T-cell (primary cell): ENCODE measurements at regions of chr12 and their contacts with region 1.

Region 1: DNA sequence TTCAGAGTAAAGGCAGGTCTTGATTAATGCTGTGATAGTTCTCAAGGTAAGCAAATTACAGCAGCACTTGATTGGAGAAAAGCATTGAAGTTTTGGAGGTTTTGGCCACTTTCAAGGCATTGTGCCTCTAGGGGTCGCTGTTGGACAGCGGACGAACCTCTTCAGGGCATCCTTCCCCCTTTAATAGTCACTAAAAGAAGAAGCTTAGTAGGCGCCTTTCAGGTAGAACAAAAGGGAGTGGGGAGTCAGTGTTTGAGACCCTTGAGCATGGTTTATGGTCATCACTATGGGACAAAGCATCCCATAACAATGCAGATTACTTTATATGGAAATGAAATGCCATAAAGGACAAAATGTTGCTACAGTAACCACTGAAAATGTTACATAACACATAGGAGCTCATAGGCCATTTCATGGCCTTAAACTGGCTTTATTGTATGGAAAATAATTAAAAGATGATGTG is 199.5 kb upstream of the DCN start:
- DNase-seq: peak; percentile 61 to 92 (median 80)
- ATAC-seq: peak; percentile 84 to 89 (median 87)
- H3K4me3 ChIP-seq: peak overlapping the region in 1 of 2 donors; percentile 67
- H3K4me3 Mint-ChIP-seq: peak overlapping the region; percentile 62 to 76 (median 74)
- H3K27ac ChIP-seq: no peak overlapping the region
- H3K27ac Mint-ChIP-seq: peak overlapping the region; percentile 40 to 64
- H3K4me1 ChIP-seq: peaks cover 8% of the 10 kb centered on the region in 2 experiments
- H3K4me1 Mint-ChIP-seq: peaks cover 6 to 16% (median 7%) of the 10 kb centered on the region in 3 donors
- H3K27me3 ChIP-seq: peaks cover 0 to 4% of the 10 kb centered on the region in 2 experiments
- H3K27me3 Mint-ChIP-seq: peaks cover 7 to 9% of the 10 kb centered on the region in 2 donors

Region 2: GRCh38 chr12:91307957-91308670 is 74.0 kb before region 1 on chr12:
- CTCF ChIA-PET with region 1: no interaction called
- POLR2A ChIA-PET with region 1: no interaction called
- DNase-seq: no peak
- ATAC-seq: no peak
- H3K4me3 ChIP-seq: no peak overlapping the region
- H3K4me3 Mint-ChIP-seq: no peak overlapping the region
- H3K27ac ChIP-seq: no peak overlapping the region
- H3K27ac Mint-ChIP-seq: no peak overlapping the region
- H3K4me1 ChIP-seq: no peaks in the 10 kb centered on the region
- H3K4me1 Mint-ChIP-seq: no peaks in the 10 kb centered on the region
- H3K27me3 ChIP-seq: no peaks in the 10 kb centered on the region
- H3K27me3 Mint-ChIP-seq: peaks cover 5 to 6% of the 10 kb centered on the region in 2 donors

Region 3: DNA sequence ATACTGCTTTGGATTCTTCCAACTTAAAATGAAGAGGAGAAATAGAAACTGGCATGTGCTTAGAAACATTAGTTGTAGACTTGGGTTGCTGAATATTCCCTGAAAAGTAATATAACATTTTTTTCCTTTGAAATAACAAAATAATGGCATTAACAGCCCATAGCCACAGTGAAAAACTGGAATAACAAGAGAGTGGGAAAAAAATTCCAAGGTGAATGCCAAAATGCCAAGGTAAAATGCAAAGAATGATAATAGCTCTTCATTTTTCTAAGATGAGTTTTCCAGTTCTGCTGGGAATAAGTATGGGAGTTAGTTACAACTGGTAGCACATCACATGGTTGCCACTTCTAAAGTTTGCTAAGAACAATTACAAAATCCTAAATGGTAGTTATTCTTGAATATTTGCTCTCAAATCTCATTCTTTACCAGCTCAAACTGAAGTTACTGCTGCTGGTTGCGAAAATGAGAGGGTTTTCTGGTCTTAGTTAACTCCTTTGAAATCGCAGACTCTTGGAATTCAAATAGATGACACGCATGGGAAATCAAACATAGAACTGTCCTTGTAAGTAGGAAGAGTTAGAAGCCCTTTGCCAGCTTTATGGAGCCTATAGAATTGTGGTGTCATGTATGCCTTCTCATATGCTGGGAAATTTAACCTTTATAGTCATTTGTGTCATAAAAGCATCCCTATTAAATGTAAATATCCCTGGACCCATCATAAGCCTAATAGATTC is 34.5 kb before region 1 on chr12:
- CTCF ChIA-PET with region 1: no interaction called
- POLR2A ChIA-PET with region 1: no interaction called
- DNase-seq: no peak
- ATAC-seq: no peak
- H3K4me3 ChIP-seq: no peak overlapping the region
- H3K4me3 Mint-ChIP-seq: no peak overlapping the region
- H3K27ac ChIP-seq: no peak overlapping the region
- H3K27ac Mint-ChIP-seq: no peak overlapping the region
- H3K4me1 ChIP-seq: no peaks in the 10 kb centered on the region
- H3K4me1 Mint-ChIP-seq: no peaks in the 10 kb centered on the region
- H3K27me3 ChIP-seq: no peaks in the 10 kb centered on the region
- H3K27me3 Mint-ChIP-seq: peaks cover 3 to 16% of the 10 kb centered on the region in 2 donors

Region 4: GRCh38 chr12:91370086-91370868 is 11.8 kb before region 1 on chr12:
- CTCF ChIA-PET with region 1: interaction called, 8 to 12 read pairs
- POLR2A ChIA-PET with region 1: no interaction called
- DNase-seq: peak in 1 of 35 experiments; percentile 4
- ATAC-seq: no peak
- H3K4me3 ChIP-seq: no peak overlapping the region
- H3K4me3 Mint-ChIP-seq: no peak overlapping the region
- H3K27ac ChIP-seq: no peak overlapping the region
- H3K27ac Mint-ChIP-seq: no peak overlapping the region
- H3K4me1 ChIP-seq: no peaks in the 10 kb centered on the region
- H3K4me1 Mint-ChIP-seq: no peaks in the 10 kb centered on the region
- H3K27me3 ChIP-seq: peaks cover 0 to 7% of the 10 kb centered on the region in 2 experiments
- H3K27me3 Mint-ChIP-seq: peaks cover 6 to 9% of the 10 kb centered on the region in 2 donors

Region 5: GRCh38 chr12:91467686-91468085 is 85.6 kb after region 1 on chr12:
- CTCF ChIA-PET with region 1: no interaction called
- POLR2A ChIA-PET with region 1: no interaction called
- DNase-seq: no peak
- ATAC-seq: no peak
- H3K4me3 ChIP-seq: no peak overlapping the region
- H3K4me3 Mint-ChIP-seq: no peak overlapping the region
- H3K27ac ChIP-seq: no peak overlapping the region
- H3K27ac Mint-ChIP-seq: no peak overlapping the region
- H3K4me1 ChIP-seq: no peaks in the 10 kb centered on the region
- H3K4me1 Mint-ChIP-seq: no peaks in the 10 kb centered on the region
- H3K27me3 ChIP-seq: peaks cover 0 to 2% of the 10 kb centered on the region in 2 experiments
- H3K27me3 Mint-ChIP-seq: no peaks in the 10 kb centered on the region

Region 6: DNA sequence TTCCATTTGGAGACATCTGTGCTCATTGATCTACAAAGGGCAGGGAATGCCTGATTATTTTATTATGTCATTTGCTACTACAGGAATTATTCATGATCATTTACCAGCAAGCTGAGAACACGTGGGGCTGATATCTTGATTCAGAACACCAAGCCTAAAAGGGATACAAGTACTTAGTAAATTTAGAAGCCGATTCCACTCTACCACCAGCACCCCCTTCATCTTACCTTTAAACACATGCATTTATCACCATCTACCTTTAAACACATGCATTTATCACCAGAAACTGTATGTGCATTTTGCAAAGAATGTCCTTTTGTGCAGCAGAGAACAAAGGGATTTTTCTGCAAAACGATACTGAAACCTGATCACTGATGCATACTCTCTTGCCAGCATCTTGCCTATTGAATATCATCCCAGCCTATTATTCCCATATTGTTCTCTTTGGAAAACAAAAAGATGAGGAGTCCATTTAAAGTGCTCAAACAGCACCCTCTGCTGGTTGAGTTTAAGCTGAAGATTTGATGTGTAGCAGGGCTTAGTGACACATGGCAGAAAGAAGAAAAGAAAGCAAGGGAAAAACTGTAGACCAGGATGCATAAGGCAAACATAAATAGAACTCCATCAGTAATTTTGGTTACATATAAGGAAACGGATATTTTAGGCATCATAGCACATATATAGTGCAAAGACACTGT is 1188.1 kb after region 1 on chr12:
- CTCF ChIA-PET with region 1: interaction called, 7 to 42 read pairs
- POLR2A ChIA-PET with region 1: interaction called in 1 of 2 experiments, 3 read pairs
- DNase-seq: peak in 28 of 35 experiments; percentile 10 to 85 (median 34)
- ATAC-seq: peak; percentile 85 to 95 (median 92)
- H3K4me3 ChIP-seq: peak overlapping the region in 1 of 2 donors; percentile 2
- H3K4me3 Mint-ChIP-seq: no peak overlapping the region
- H3K27ac ChIP-seq: peak overlapping the region; percentile 25
- H3K27ac Mint-ChIP-seq: no peak overlapping the region
- H3K4me1 ChIP-seq: peaks cover 0 to 9% of the 10 kb centered on the region in 2 experiments
- H3K4me1 Mint-ChIP-seq: peaks cover 5 to 35% (median 26%) of the 10 kb centered on the region in 3 donors
- H3K27me3 ChIP-seq: no peaks in the 10 kb centered on the region
- H3K27me3 Mint-ChIP-seq: no peaks in the 10 kb centered on the region

Region 7: GRCh38 chr12:92649511-92650227 is 1267.6 kb after region 1 on chr12:
- CTCF ChIA-PET with region 1: interaction called, 24 to 36 read pairs
- POLR2A ChIA-PET with region 1: interaction called, 4 read pairs
- DNase-seq: peak in 34 of 35 experiments; percentile 11 to 85 (median 48)
- ATAC-seq: peak; percentile 78 to 87 (median 84)
- H3K4me3 ChIP-seq: no peak overlapping the region
- H3K4me3 Mint-ChIP-seq: no peak overlapping the region
- H3K27ac ChIP-seq: no peak overlapping the region
- H3K27ac Mint-ChIP-seq: no peak overlapping the region
- H3K4me1 ChIP-seq: no peaks in the 10 kb centered on the region
- H3K4me1 Mint-ChIP-seq: peaks cover 5 to 22% (median 15%) of the 10 kb centered on the region in 3 donors
- H3K27me3 ChIP-seq: no peaks in the 10 kb centered on the region
- H3K27me3 Mint-ChIP-seq: peaks cover 0 to 2% of the 10 kb centered on the region in 2 donors

Region 8: GRCh38 chr12:92654929-92655328 is 1272.8 kb after region 1 on chr12:
- CTCF ChIA-PET with region 1: interaction called, 24 to 36 read pairs
- POLR2A ChIA-PET with region 1: interaction called, 3 to 4 read pairs
- DNase-seq: no peak
- ATAC-seq: no peak
- H3K4me3 ChIP-seq: no peak overlapping the region
- H3K4me3 Mint-ChIP-seq: no peak overlapping the region
- H3K27ac ChIP-seq: no peak overlapping the region
- H3K27ac Mint-ChIP-seq: no peak overlapping the region
- H3K4me1 ChIP-seq: no peaks in the 10 kb centered on the region
- H3K4me1 Mint-ChIP-seq: peaks cover 1 to 3% (median 3%) of the 10 kb centered on the region in 3 donors
- H3K27me3 ChIP-seq: no peaks in the 10 kb centered on the region
- H3K27me3 Mint-ChIP-seq: peaks cover 0 to 5% of the 10 kb centered on the region in 2 donors